ENCODE measurements at regions of chr17 and their contacts with region 1.

Region 1: GRCh38 chr17:27529230-27529796 is 73.1 kb downstream of the KSR1 start:
- DNase-seq: peak; percentile 37 to 86 (median 60)
- ATAC-seq: peak; percentile 73
- H3K4me3 ChIP-seq: no peak overlapping the region
- H3K27ac ChIP-seq: peak overlapping the region; percentile 80
- H3K4me1 ChIP-seq: peaks cover 36 to 81% of the 10 kb centered on the region in 2 experiments
- H3K27me3 ChIP-seq: no peaks in the 10 kb centered on the region
- CTCF ChIP-seq: peak in 2 of 3 experiments; percentile 34 to 40; a peak in 3 of 6 replicates
- EP300 ChIP-seq: peak; percentile 93
- POLR2A ChIP-seq: no peak
- RAD21 ChIP-seq: peak; percentile 35 to 56; a peak in 3 of 4 replicates

Region 2: DNA sequence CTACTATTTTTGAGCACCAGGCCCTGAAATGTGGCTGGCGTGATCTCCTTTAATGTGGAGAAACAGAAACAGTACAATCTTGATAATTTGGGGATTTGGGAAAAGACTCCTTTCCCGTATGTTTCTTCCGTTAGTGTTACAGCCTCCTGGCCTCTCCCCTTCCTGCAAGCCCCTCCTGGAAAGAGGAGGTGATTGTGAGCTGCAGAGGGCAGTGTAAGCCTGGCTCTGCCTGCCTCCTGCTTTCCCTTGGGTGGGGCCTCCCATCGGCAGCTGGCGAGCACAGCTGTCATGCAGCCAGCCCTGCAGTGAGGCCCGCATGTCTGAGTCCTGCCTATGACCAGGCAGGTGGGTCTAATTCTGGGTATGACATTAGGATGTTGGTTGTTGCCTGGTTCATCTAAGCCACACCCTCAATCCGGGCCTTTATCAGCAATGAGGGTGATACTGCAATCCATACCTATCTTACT is 284.1 kb before region 1 on chr17:
- CTCF ChIA-PET with region 1: no interaction called
- POLR2A ChIA-PET with region 1: no interaction called
- in situ Hi-C with region 1: no loop called
- intact Hi-C with region 1: no loop called
- DNase-seq: peak; percentile 84 to 90 (median 88)
- ATAC-seq: peak; percentile 100
- H3K4me3 ChIP-seq: no peak overlapping the region
- H3K27ac ChIP-seq: no peak overlapping the region
- H3K4me1 ChIP-seq: peaks cover 7 to 13% of the 10 kb centered on the region in 2 experiments; a peak in 4 of 5 replicates
- H3K27me3 ChIP-seq: no peaks in the 10 kb centered on the region; a peak in 1 of 5 replicates
- CTCF ChIP-seq: peak; percentile 95 to 97 (median 96)
- EP300 ChIP-seq: no peak
- POLR2A ChIP-seq: no peak
- RAD21 ChIP-seq: peak; percentile 98 to 99

Region 3: GRCh38 chr17:27466743-27467375 is 62.5 kb before region 1 on chr17:
- CTCF ChIA-PET with region 1: no interaction called
- POLR2A ChIA-PET with region 1: interaction called, 4 read pairs
- in situ Hi-C with region 1: no loop called
- intact Hi-C with region 1: loop called (anchors 2 kb)
- DNase-seq: peak in 2 of 4 experiments; percentile 36 to 60
- ATAC-seq: peak; percentile 60
- H3K4me3 ChIP-seq: no peak overlapping the region
- H3K27ac ChIP-seq: peak overlapping the region; percentile 66
- H3K4me1 ChIP-seq: peaks cover 54 to 71% of the 10 kb centered on the region in 2 experiments
- H3K27me3 ChIP-seq: no peaks in the 10 kb centered on the region
- CTCF ChIP-seq: no peak
- EP300 ChIP-seq: no peak
- POLR2A ChIP-seq: no peak
- RAD21 ChIP-seq: no peak

Region 4: GRCh38 chr17:27544350-27545131 is 15.2 kb after region 1 on chr17:
- CTCF ChIA-PET with region 1: no interaction called
- POLR2A ChIA-PET with region 1: interaction called, 21 read pairs
- in situ Hi-C with region 1: no loop called
- intact Hi-C with region 1: no loop called
- DNase-seq: peak; percentile 59 to 87 (median 74)
- ATAC-seq: peak; percentile 75
- H3K4me3 ChIP-seq: no peak overlapping the region
- H3K27ac ChIP-seq: peak overlapping the region; percentile 49; the same call in 1 of the 3 replicates
- H3K4me1 ChIP-seq: peaks cover 55 to 63% of the 10 kb centered on the region in 2 experiments
- H3K27me3 ChIP-seq: no peaks in the 10 kb centered on the region
- CTCF ChIP-seq: peak; percentile 20 to 23 (median 21); a peak in 2 of 6 replicates
- EP300 ChIP-seq: peak; percentile 80
- POLR2A ChIP-seq: no peak
- RAD21 ChIP-seq: peak; percentile 25 to 43

Region 5: DNA sequence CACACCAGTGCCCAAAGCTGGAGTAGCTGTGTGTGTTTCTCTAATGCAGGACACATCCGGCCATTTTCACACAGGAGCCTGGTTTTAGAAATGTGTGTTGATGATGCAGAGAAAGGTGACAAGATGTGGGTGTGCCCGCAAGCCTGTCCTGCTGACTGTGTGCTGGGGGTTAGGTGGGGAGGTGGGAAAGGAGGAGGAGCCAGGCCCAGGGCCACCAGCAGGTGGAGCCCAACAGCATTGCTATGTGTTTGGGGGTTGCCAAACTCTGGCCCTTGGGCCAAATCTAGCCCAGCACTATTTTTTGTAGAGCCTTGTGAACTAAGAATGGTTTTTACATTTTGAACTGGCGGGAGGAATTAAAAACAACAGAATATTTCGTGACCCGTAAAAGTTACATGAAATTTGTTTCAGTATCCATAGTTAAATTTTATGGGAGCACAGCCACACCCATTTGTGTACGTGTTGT is 40.0 kb after region 1 on chr17:
- CTCF ChIA-PET with region 1: no interaction called
- POLR2A ChIA-PET with region 1: interaction called, 4 read pairs
- in situ Hi-C with region 1: no loop called
- intact Hi-C with region 1: loop called (anchors 1 kb)
- DNase-seq: peak; percentile 87 to 93 (median 91)
- ATAC-seq: peak; percentile 80
- H3K4me3 ChIP-seq: no peak overlapping the region
- H3K27ac ChIP-seq: peak overlapping the region; percentile 92
- H3K4me1 ChIP-seq: peaks cover 61 to 84% of the 10 kb centered on the region in 2 experiments
- H3K27me3 ChIP-seq: no peaks in the 10 kb centered on the region
- CTCF ChIP-seq: peak; percentile 84 to 96 (median 89)
- EP300 ChIP-seq: peak; percentile 45; the same call in 1 of the 2 replicates
- POLR2A ChIP-seq: no peak
- RAD21 ChIP-seq: peak; percentile 62 to 78

Region 6: DNA sequence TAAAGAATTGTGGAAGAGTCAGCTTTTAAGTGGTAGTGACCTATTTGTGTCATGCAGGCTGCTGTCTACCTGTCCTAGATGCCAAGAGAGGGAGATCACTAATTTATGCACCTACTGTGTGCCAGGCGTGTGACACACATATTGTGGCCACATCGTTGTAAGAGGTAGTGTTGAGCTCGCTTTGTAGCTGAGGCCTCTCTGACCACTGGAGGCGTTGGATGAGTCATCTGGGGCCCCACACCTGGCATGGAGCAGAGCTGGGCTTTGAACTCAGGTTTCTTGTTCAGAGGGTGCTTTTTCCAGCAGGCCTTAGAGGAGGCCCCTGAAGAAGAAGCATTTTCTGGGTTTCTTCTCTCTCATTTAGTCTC is 49.4 kb after region 1 on chr17:
- CTCF ChIA-PET with region 1: no interaction called
- POLR2A ChIA-PET with region 1: interaction called, 4 read pairs
- in situ Hi-C with region 1: no loop called
- intact Hi-C with region 1: loop called (anchors 2 kb)
- DNase-seq: peak; percentile 51 to 78 (median 56)
- ATAC-seq: no peak; the same call in 2 of the 3 replicates
- H3K4me3 ChIP-seq: no peak overlapping the region
- H3K27ac ChIP-seq: peak overlapping the region; percentile 92
- H3K4me1 ChIP-seq: peaks cover 45 to 68% of the 10 kb centered on the region in 2 experiments
- H3K27me3 ChIP-seq: no peaks in the 10 kb centered on the region
- CTCF ChIP-seq: 0 out of 6 replicates have a peak, but pooled peaks of 2 of the 3 experiments have one; percentile 26 to 32
- EP300 ChIP-seq: no peak
- POLR2A ChIP-seq: no peak
- RAD21 ChIP-seq: peak in 1 of 2 experiments; percentile 16; a peak in 1 of 4 replicates

Measured in K562 (cell line).